A549 (cell line): ENCODE measurements at regions of chr17 and their contacts with region 1.

Region 1: GRCh38 chr17:79057737-79058385 is 16.8 kb upstream of the ENGASE start:
- DNase-seq: no peak
- ATAC-seq: peak; percentile 25 to 39; a peak in 1 of 6 replicates
- H3K4me3 ChIP-seq: no peak overlapping the region
- H3K27ac ChIP-seq: no peak overlapping the region
- H3K4me1 ChIP-seq: no peaks in the 10 kb centered on the region
- CTCF ChIP-seq: no peak
- EP300 ChIP-seq: no peak
- POLR2A ChIP-seq: no peak
- RAD21 ChIP-seq: no peak

Region 2: GRCh38 chr17:78890498-78890897 is 167.4 kb before region 1 on chr17:
- CTCF ChIA-PET with region 1: no interaction called
- POLR2A ChIA-PET with region 1: no interaction called
- DNase-seq: no peak
- ATAC-seq: no peak
- H3K4me3 ChIP-seq: no peak overlapping the region
- H3K27ac ChIP-seq: no peak overlapping the region
- H3K4me1 ChIP-seq: peaks cover 17% of the 10 kb centered on the region
- CTCF ChIP-seq: no peak
- EP300 ChIP-seq: no peak
- POLR2A ChIP-seq: no peak
- RAD21 ChIP-seq: no peak

Region 3: DNA sequence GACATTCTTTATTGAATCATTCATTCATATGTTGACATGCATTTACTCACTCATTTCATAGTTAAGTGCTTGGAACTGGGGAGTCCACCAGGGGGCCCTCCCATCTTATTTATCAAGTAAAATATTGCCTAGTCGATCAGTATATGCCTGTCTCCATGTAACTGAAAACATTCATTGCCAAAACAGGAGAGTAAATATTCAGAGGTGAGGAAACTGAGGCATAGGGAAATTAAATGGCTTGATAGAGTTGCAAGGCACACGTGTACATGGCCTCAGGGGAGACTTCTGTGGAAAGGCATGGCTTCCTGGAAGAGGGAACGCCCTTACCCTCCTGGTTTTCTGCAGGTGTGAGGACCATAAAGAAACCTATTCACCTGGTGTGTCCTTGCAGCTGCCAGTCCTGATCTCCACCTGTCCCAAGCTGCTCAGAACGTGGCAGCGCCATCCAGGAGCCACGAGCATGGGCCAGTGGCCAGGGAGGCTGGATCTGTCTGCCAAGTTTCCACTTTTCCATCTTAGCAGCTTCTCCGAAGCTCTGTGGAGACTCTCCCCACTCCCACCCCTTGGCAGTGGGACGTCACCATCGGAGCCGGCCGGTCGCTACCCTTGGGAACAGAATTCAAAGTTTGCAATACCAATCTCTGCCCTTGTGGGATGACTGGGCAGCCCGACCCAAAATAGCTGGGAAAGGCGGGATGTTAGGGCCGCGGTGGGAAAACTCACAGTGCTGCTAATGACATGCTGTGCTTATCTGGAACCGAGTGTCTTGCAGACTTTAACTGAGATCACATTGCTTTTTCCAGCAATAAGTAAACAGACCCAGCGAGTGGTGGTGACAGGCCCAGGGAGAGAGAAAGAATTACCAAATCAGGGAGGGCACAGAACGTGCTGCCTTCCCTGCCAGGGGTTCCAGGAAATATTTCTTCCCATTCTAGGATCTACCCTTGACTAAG is 38.0 kb before region 1 on chr17:
- CTCF ChIA-PET with region 1: interaction called, 10 read pairs
- POLR2A ChIA-PET with region 1: no interaction called
- DNase-seq: peak; percentile 71 to 82
- ATAC-seq: peak; percentile 48 to 62; a peak in 3 of 6 replicates
- H3K4me3 ChIP-seq: no peak overlapping the region
- H3K27ac ChIP-seq: peak overlapping the region; percentile 32 to 43; a peak in 4 of 6 replicates
- H3K4me1 ChIP-seq: peaks cover 15% of the 10 kb centered on the region
- CTCF ChIP-seq: peak; percentile 98
- EP300 ChIP-seq: no peak; a peak in 1 of 5 replicates
- POLR2A ChIP-seq: no peak
- RAD21 ChIP-seq: peak; percentile 91 to 96

Region 4: GRCh38 chr17:79074650-79075445 is 17.0 kb after region 1 on chr17 and contains the start of gene ENGASE:
- CTCF ChIA-PET with region 1: interaction called, 289 read pairs
- POLR2A ChIA-PET with region 1: interaction called, 3 read pairs
- DNase-seq: peak; percentile 95 to 98
- ATAC-seq: peak; percentile 96 to 98
- H3K4me3 ChIP-seq: peak within 1 kb of the TSS; percentile 79
- H3K27ac ChIP-seq: peak within 1 kb of the TSS; percentile 81 to 91
- H3K4me1 ChIP-seq: peaks cover 12% of the 10 kb centered on the region; the same call in 2 of the 3 replicates
- CTCF ChIP-seq: no peak
- EP300 ChIP-seq: no peak
- POLR2A ChIP-seq: peak; percentile 94
- RAD21 ChIP-seq: no peak
- polyA plus RNA-seq, gene ENGASE: 11.5 and 13.4 TPM in 2 replicates